ENCODE measurements at regions of chr5 and their contacts with region 1.

Region 1: DNA sequence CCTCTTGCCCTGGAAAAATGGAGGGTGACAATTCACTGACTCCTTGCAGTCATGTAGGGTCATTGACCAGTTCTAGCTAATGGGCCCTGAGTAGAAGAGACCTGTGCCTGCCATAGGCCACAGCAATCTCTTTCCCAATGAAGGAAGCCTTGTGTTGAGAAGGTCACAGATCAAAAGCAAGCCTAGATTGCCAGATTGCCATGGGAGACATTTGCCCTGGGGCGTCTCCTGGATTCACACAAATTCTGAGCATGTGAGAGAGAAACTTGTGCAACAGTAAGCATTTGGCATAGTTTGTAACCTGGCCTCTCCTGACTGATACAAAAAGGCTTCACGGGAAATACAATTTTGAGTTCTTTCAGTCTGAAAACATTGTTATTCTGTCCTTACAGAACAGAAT is 148.0 kb downstream of the NUDT12 start:
- DNase-seq: no peak
- H3K4me3 ChIP-seq: no peak overlapping the region
- H3K27ac ChIP-seq: no peak overlapping the region
- H3K4me1 ChIP-seq: no peaks in the 10 kb centered on the region
- H3K27me3 ChIP-seq: peaks cover under 1 to 2% of the 10 kb centered on the region in 2 experiments
- CTCF ChIP-seq: no peak
- POLR2A ChIP-seq: no peak

Region 2: DNA sequence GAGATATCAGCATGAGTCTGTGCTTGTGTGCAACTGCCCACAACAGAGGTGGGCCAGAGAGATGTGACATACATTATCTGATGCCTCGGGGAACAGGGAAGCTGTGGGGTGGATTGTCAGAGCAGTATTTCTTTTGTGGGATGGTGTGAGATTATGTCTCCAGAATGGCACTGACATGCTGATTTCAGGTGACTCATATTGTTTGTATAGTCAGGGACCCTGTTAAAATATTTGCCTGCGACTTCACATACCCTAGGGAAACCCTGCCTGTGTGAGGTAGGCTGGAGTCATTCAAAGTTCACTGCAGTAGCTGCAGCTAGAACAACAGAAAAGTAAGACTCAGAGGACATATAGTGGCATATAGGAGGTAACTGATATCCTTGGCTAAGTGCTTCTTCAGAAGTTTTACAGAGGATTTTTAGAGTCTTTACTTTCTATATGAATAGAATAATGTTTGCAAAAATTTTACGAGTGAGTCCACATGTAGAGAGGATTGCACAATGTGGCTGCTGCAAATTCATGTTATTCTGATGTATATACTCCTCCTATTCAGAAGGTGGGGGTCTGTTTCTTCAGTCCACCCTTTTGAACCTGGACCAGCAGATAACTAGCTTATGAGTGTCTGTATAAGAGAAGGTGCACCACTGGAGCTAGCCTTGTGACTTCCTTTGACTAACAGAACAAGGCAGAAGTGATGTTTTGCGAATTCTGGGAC is 66.7 kb before region 1 on chr5:
- CTCF ChIA-PET with region 1: no interaction called
- POLR2A ChIA-PET with region 1: no interaction called
- dilution Hi-C with region 1: no loop called
- intact Hi-C with region 1: loop called (anchors 2 kb)
- DNase-seq: no peak
- H3K4me3 ChIP-seq: no peak overlapping the region
- H3K27ac ChIP-seq: no peak overlapping the region
- H3K4me1 ChIP-seq: no peaks in the 10 kb centered on the region
- H3K27me3 ChIP-seq: no peaks in the 10 kb centered on the region
- CTCF ChIP-seq: no peak
- POLR2A ChIP-seq: no peak

Region 3: GRCh38 chr5:103393101-103393754 is 21.4 kb before region 1 on chr5:
- CTCF ChIA-PET with region 1: no interaction called
- POLR2A ChIA-PET with region 1: interaction called, 17 read pairs
- dilution Hi-C with region 1: no loop called
- intact Hi-C with region 1: no loop called
- DNase-seq: no peak
- H3K4me3 ChIP-seq: no peak overlapping the region
- H3K27ac ChIP-seq: no peak overlapping the region
- H3K4me1 ChIP-seq: no peaks in the 10 kb centered on the region
- H3K27me3 ChIP-seq: peaks cover 2% of the 10 kb centered on the region in 2 experiments
- CTCF ChIP-seq: no peak
- POLR2A ChIP-seq: no peak